HCT116 (cell line): ENCODE measurements at regions of chr9 and their contacts with region 1.

Region 1: DNA sequence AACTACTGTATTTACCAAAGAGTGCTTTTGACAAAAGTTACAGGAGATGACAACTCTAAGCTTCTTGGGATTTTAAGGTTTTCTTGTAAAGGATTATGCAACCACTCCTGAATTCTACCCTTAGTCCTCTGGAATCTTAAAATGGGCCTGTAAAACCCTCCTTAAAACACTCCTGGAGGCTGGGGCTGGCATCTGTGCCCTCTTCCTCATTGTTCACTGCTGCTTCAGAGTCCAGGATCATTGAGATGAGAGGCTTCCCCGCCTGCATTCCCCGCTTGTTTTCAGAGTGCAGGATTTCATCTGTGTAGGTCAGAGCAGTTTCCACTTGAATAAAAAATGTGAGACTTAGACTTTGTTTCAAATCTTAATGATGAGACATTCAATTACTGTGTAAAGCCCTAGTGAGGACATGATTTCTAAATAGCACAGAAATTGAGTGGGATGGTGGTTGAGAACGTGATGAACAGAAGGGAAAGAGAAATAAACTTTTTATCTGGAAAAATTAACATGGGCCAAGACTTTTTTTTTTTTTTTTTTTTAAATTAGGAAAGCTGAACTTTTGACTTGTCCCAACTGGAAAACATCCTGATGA is 40.4 kb downstream of the PCSK5 start:
- DNase-seq: no peak
- ATAC-seq: no peak
- H3K4me3 ChIP-seq: no peak overlapping the region
- H3K27ac ChIP-seq: no peak overlapping the region
- H3K4me1 ChIP-seq: no peaks in the 10 kb centered on the region
- H3K27me3 ChIP-seq: no peaks in the 10 kb centered on the region
- CTCF ChIP-seq: no peak
- POLR2A ChIP-seq: no peak
- RAD21 ChIP-seq: no peak

Region 2: DNA sequence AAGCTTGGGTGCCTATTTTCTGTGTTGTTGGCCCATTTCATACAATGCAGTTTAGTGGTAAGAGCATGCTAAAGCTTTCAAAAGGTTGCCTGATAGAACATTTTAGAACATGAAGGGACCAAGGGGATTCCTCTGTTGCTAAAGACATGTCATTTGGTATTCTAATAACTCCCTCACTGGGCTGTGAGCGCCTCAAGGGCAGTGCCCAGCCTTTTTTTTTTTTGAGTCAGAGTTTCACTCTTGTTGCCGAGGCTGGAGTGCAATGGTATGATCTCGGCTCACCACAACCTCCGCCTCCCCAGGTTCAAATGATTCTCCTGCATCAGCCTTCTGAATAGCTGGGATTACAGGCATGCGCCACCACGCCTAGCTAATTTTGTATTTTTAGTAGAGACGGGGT is 36.7 kb after region 1 on chr9:
- CTCF ChIA-PET with region 1: no interaction called
- POLR2A ChIA-PET with region 1: no interaction called
- RAD21 ChIA-PET with region 1: no interaction called
- intact Hi-C with region 1: loop called (anchors 5 kb)
- DNase-seq: no peak
- ATAC-seq: no peak
- H3K4me3 ChIP-seq: no peak overlapping the region
- H3K27ac ChIP-seq: no peak overlapping the region
- H3K4me1 ChIP-seq: peaks cover 7 to 14% of the 10 kb centered on the region in 2 experiments; a peak in 3 of 4 replicates
- H3K27me3 ChIP-seq: no peaks in the 10 kb centered on the region
- CTCF ChIP-seq: no peak
- POLR2A ChIP-seq: no peak
- RAD21 ChIP-seq: no peak

Region 3: GRCh38 chr9:75983319-75984045 is 52.7 kb after region 1 on chr9:
- CTCF ChIA-PET with region 1: interaction called, 4 read pairs
- POLR2A ChIA-PET with region 1: no interaction called
- RAD21 ChIA-PET with region 1: no interaction called
- intact Hi-C with region 1: loop called (anchors 5 kb)
- DNase-seq: no peak
- ATAC-seq: no peak
- H3K4me3 ChIP-seq: no peak overlapping the region
- H3K27ac ChIP-seq: no peak overlapping the region
- H3K4me1 ChIP-seq: no peaks in the 10 kb centered on the region
- H3K27me3 ChIP-seq: no peaks in the 10 kb centered on the region
- CTCF ChIP-seq: no peak
- POLR2A ChIP-seq: no peak
- RAD21 ChIP-seq: no peak